Activated naive CD4-positive, alpha-beta T cell treated with anti-CD3 and anti-CD28 coated beads, Interleukin-2, amount 10 ng/mL, durations not matched to agents 7 days and 5 days (primary cell): ENCODE measurements at regions of chr1 and their contacts with region 1.

Region 1: DNA sequence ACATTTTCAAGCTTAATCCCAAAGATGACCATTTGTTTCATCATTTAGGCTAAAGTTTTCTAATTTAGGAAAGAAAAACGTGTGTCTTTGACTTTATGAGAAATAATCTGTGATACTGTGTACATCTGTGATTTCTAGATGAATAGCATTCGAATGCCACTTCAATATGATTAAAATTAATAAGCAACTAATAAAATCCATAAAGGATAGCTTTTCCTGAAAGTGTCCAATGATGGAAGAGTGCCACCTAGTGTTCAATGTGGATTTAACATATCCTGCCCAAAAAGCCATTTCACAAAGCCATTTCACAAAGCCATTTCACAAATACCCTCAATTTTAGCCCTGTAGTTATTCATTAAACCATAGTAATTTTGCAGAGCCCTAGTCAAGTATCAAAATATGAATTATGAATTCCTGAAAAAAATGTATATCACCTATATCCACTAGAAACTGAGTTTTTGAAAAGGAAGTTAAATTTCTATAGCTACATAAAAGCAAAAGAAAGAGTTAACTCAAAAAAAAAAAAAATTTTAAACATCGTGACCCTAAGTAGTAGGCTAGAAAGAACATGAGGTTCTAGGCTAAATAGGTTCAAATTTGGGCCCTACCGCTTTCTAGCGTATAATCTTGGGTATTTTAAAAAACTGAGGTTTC is 19.1 kb downstream of the NME7 start:
- DNase-seq: no peak
- H3K4me3 Mint-ChIP-seq: no peak overlapping the region
- H3K27ac Mint-ChIP-seq: no peak overlapping the region
- H3K4me1 Mint-ChIP-seq: peaks cover 2% of the 10 kb centered on the region
- H3K27me3 Mint-ChIP-seq: peaks cover 4% of the 10 kb centered on the region

Region 2: GRCh38 chr1:168603501-168604110 is 744.9 kb before region 1 on chr1:
- CTCF ChIA-PET with region 1: interaction called, 79 read pairs
- DNase-seq: peak; percentile 82
- H3K4me3 Mint-ChIP-seq: no peak overlapping the region
- H3K27ac Mint-ChIP-seq: no peak overlapping the region
- H3K4me1 Mint-ChIP-seq: no peaks in the 10 kb centered on the region
- H3K27me3 Mint-ChIP-seq: peaks cover 12% of the 10 kb centered on the region

Region 3: GRCh38 chr1:168637350-168637991 is 711.0 kb before region 1 on chr1:
- CTCF ChIA-PET with region 1: interaction called, 16 read pairs
- DNase-seq: no peak
- H3K4me3 Mint-ChIP-seq: no peak overlapping the region
- H3K27ac Mint-ChIP-seq: no peak overlapping the region
- H3K4me1 Mint-ChIP-seq: no peaks in the 10 kb centered on the region
- H3K27me3 Mint-ChIP-seq: peaks cover 12% of the 10 kb centered on the region

Region 4: GRCh38 chr1:169309178-169310166 is 39.0 kb before region 1 on chr1:
- CTCF ChIA-PET with region 1: no interaction called
- DNase-seq: no peak
- H3K4me3 Mint-ChIP-seq: peak overlapping the region; percentile 30
- H3K27ac Mint-ChIP-seq: peak overlapping the region; percentile 49
- H3K4me1 Mint-ChIP-seq: peaks cover 13% of the 10 kb centered on the region
- H3K27me3 Mint-ChIP-seq: no peaks in the 10 kb centered on the region

Region 5: DNA sequence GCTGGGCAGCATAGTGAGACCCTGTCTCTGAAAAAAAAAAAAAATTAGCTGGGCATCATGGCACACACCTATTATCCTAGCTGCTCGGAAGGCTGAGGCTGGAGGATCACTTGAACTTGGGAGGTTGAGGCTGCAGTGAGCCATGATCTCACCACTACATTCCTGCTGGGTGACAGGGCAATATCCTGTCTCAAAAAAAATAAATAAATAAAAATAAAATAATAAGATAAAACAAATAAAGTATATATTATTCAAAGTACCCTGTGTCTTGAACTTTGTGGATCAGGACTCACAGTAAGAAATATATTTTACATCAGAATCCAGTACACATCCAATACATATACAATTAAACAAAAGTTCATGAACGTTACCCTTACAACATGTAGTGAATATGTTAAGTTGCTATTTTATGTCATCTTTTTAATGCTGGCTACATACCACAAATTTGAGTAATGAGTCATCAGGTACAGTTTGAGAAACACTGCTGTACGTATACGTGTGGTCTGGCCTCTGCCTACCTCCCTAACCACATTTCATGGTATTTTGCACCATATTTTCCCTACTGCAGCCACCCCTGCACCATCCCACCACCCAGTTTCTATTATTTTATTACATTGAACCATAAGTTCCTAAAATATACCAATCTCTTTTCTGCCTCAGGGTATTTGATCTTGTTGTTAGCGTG is 14.7 kb after region 1 on chr1:
- CTCF ChIA-PET with region 1: interaction called, 12 read pairs
- DNase-seq: peak; percentile 27
- H3K4me3 Mint-ChIP-seq: no peak overlapping the region
- H3K27ac Mint-ChIP-seq: no peak overlapping the region
- H3K4me1 Mint-ChIP-seq: peaks cover 18% of the 10 kb centered on the region
- H3K27me3 Mint-ChIP-seq: no peaks in the 10 kb centered on the region

Region 6: DNA sequence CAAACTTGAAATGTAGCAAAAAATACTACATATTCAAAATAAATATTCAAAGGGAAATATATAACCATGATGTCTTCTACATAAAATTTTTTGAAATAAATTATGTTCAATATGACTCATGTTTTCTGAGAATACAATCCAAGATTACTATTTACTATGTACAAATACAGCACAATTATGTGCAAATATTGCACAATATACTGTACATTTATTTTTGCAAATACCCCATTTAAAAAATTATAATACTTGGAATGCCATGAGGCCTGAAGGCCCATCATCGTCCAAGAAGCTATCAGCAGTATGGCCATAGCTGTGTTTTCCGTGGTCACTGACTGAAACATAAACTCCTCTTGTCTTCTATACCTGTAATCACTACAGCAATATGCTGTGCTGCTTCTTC is 66.4 kb after region 1 on chr1:
- CTCF ChIA-PET with region 1: no interaction called
- DNase-seq: no peak
- H3K4me3 Mint-ChIP-seq: no peak overlapping the region
- H3K27ac Mint-ChIP-seq: no peak overlapping the region
- H3K4me1 Mint-ChIP-seq: no peaks in the 10 kb centered on the region
- H3K27me3 Mint-ChIP-seq: peaks cover 4% of the 10 kb centered on the region

Region 7: DNA sequence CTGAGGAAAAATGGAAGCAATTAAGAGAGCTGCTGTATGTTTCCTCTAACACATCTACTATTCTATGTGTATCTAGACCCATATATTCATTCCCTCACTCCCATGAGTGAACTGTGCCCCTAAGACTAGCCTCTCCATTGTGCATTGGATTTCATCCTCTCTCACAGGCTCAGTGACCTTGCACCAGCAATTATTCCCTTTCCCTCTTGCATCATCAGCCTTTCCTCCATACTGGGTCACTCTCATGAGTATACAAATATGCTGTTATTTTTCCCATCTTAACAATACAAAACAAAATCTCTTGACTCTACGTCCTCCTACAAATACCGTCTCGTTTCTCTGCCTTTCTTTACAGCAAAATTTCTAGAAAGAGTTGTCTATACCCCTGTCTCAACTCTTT is 475.6 kb after region 1 on chr1:
- CTCF ChIA-PET with region 1: no interaction called
- DNase-seq: no peak
- H3K4me3 Mint-ChIP-seq: no peak overlapping the region
- H3K27ac Mint-ChIP-seq: no peak overlapping the region
- H3K4me1 Mint-ChIP-seq: no peaks in the 10 kb centered on the region
- H3K27me3 Mint-ChIP-seq: no peaks in the 10 kb centered on the region